Left ventricle myocardium superior (tissue), 1 donor: ENCODE measurements at regions of chr10 and their contacts with region 1.

Region 1: GRCh38 chr10:125158601-125159485 is 1.5 kb downstream of the CTBP2 start:
- DNase-seq: peak; percentile 80
- ATAC-seq: peak; percentile 49

Region 2: GRCh38 chr10:125084191-125084613 is 74.6 kb before region 1 on chr10:
- intact Hi-C with region 1: loop called (anchors 10 kb)
- DNase-seq: no peak
- ATAC-seq: peak; percentile 72

Region 3: DNA sequence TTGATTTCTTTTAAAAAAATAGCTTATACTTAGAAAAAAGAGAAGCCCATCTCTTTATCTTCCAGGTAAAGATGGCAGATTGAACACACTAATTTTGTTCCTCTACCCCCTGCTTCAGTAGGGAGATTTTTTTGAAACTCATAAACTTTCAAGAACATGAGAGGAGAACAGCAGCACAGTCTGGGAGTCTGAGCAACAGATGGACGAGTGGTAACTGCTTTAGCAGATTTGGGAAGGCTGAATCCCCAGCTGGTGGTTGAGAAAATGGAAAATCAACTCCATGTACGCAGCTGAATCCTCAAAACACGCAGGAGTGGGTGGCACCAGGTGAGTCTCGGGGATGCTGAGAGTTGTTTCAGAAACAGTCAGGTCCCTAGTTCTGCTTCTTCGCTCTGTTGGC is 116.1 kb after region 1 on chr10:
- intact Hi-C with region 1: no loop called
- DNase-seq: no peak
- ATAC-seq: no peak